Common myeloid progenitor, CD34-positive (primary cell): ENCODE measurements at regions of chr10 and their contacts with region 1.

Region 1: DNA sequence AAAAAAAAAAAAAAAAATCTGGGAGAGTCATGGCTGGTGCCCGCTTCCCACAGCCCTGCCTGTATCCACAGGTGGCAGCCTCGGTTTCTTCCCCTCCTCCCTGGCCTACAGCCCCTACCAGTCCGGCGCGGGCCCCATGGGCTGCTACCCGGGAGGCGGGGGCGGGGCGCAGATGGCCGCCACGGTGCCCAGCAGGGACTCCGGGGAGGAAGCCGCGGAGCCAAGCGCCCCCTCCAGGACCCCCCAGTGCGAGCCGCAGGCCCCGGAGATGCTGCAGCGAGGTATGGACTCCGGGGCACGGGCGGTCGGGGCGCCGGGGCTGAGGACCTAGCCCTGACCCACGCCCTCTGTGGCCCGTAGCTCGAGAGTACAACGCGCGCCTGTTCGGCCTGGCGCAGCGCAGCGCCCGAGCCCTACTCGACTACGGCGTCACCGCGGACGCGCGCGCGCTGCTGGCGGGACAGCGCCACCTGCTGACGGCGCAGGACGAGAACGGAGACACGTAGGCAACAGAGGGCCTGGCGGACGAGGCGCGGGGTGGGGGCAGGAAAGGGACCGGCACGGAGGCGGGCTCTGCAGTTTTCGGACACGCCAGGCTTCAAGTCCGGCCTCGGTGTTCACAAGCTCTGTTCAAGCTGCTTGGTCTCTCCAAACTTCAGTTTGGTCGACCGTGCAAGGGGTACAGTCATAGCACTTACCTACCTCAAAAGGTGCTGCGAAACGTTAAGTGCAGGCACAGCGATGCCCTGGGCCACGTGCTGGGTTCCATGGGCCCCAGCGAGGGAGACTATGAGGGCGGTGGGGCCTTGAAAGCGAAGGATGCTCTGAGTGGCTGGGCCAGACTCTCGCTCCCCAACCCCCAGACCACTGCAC is 3.9 kb downstream of the NFKB2 start:
- DNase-seq: peak; percentile 88 to 92 (median 92)
- H3K4me3 ChIP-seq: peak overlapping the region; percentile 32 to 75 (median 44)
- H3K27ac ChIP-seq: no peak overlapping the region
- H3K4me1 ChIP-seq: peaks cover 0 to 33% (median 28%) of the 10 kb centered on the region in 4 experiments
- H3K27me3 ChIP-seq: no peaks in the 10 kb centered on the region

Region 2: GRCh38 chr10:102384053-102384452 is 15.4 kb before region 1 on chr10:
- CTCF ChIA-PET with region 1: interaction called, 45 read pairs
- POLR2A ChIA-PET with region 1: interaction called, 4 read pairs
- DNase-seq: peak in 1 of 3 donors; percentile 51
- H3K4me3 ChIP-seq: no peak overlapping the region
- H3K27ac ChIP-seq: no peak overlapping the region
- H3K4me1 ChIP-seq: no peaks in the 10 kb centered on the region
- H3K27me3 ChIP-seq: no peaks in the 10 kb centered on the region

Region 3: GRCh38 chr10:102511583-102512274 is 112.3 kb after region 1 on chr10:
- CTCF ChIA-PET with region 1: no interaction called
- POLR2A ChIA-PET with region 1: no interaction called
- DNase-seq: peak; percentile 29 to 61 (median 60)
- H3K4me3 ChIP-seq: no peak overlapping the region
- H3K27ac ChIP-seq: peak overlapping the region in 1 of 2 experiments; percentile 27
- H3K4me1 ChIP-seq: peaks cover 2 to 28% (median 15%) of the 10 kb centered on the region in 4 experiments
- H3K27me3 ChIP-seq: no peaks in the 10 kb centered on the region